H1 (cell line): ENCODE measurements at regions of chr4 and their contacts with region 1.

Region 1: GRCh38 chr4:75683482-75684155 is 10.4 kb upstream of the G3BP2 start:
- DNase-seq: no peak
- H3K4me3 ChIP-seq: no peak overlapping the region
- H3K27ac ChIP-seq: no peak overlapping the region
- H3K4me1 ChIP-seq: no peaks in the 10 kb centered on the region
- H3K27me3 ChIP-seq: no peaks in the 10 kb centered on the region
- CTCF ChIP-seq: no peak
- EP300 ChIP-seq: no peak
- POLR2A ChIP-seq: no peak
- RAD21 ChIP-seq: no peak

Region 2: DNA sequence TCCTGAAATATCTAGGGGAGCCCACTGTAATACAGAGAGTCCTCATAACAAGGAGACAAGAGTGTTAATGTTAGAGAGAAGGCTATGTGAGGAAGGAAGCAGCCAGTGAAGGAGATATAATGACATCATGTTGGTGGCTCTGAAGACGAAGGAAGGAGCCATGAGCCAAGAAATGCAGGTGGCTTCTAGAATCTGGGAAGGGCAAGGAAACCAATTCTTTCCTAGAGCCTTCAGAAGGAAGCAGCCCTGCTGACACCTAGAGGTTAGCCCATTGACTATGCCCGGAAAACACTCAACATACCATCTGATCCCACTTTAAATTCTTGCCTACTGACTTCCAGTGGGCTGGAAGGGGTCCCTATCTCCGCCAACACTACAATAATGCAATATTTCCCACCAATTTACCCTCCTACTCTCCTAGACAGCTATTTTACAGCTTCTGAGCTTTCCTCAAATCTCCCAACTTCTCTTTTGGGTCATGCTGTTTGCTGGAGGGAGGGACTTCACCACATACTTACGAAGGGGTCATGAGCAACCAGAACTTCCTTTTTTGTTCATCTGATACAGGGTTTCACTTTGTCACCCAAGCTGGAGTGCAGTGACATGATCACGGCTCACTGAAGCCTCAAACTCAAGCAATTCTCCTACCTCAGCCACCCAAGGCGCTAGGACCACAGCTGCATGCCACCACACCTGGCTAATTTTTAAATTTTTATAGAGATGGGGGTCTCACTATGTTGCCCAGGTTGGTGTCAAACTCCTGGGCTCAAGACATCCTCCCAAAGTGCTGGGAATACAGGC is 14.7 kb after region 1 on chr4:
- CTCF ChIA-PET with region 1: interaction called, 12 read pairs
- POLR2A ChIA-PET with region 1: interaction called, 7 read pairs
- DNase-seq: no peak
- H3K4me3 ChIP-seq: no peak overlapping the region
- H3K27ac ChIP-seq: 0 out of 2 replicates have a peak overlapping the region, but pooled peaks have one; percentile 32
- H3K4me1 ChIP-seq: peaks cover 7 to 13% (median 10%) of the 10 kb centered on the region in 4 experiments; a peak in 6 of 7 replicates
- H3K27me3 ChIP-seq: no peaks in the 10 kb centered on the region
- CTCF ChIP-seq: peak in 1 of 3 experiments; percentile 24; a peak in 1 of 4 replicates
- EP300 ChIP-seq: no peak
- POLR2A ChIP-seq: no peak
- RAD21 ChIP-seq: peak; percentile 16 to 30; a peak in 2 of 4 replicates